ENCODE measurements at regions of chr1 and their contacts with region 1.

Region 1: GRCh38 chr1:198681831-198682759 is 43.3 kb downstream of the PTPRC start:
- DNase-seq: peak; percentile 93
- ATAC-seq: peak; percentile 89
- H3K4me3 ChIP-seq: peak overlapping the region; percentile 11; the same call in 1 of the 2 replicates
- H3K27ac ChIP-seq: peak overlapping the region; percentile 6; the same call in 1 of the 2 replicates
- H3K4me1 ChIP-seq: no peaks in the 10 kb centered on the region
- H3K27me3 ChIP-seq: no peaks in the 10 kb centered on the region
- CTCF ChIP-seq: no peak
- POLR2A ChIP-seq: 0 out of 2 replicates have a peak, but pooled peaks have one; percentile 18
- RAD21 ChIP-seq: peak; percentile 34

Region 2: DNA sequence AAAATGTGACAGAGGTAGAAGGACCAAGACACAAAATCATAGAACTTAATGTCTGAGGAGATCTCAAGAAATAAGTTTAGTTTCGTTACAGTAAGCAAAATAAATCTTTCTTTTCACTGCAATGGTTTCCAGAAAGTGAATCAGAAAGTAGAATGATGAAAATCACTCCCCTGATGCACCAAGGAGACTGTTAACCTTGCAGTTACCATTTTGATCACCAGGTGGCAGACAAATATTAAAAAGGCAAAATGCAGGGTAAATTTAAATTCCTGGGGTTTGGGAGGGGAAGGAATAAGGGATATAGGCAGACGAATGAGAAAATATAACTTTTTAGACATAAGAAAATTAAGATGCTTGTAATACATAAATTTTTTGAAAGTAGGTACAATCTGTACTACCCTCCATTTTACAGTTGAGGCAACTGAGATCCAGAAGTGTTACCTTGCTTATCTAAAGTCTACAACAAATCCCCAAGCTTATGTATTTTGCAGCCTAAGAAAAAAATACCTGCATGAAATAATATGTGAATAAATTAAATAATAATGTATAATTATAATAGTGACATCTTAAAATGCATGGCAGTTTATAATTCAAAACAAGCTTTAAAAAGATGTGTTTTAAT is 1160.9 kb before region 1 on chr1:
- CTCF ChIA-PET with region 1: no interaction called
- POLR2A ChIA-PET with region 1: no interaction called
- dilution Hi-C with region 1: no loop called
- in situ Hi-C with region 1: loop called (anchors 25 kb)
- intact Hi-C with region 1: loop called (anchors 5 kb)
- DNase-seq: peak; percentile 44
- ATAC-seq: peak; percentile 66
- H3K4me3 ChIP-seq: no peak overlapping the region
- H3K27ac ChIP-seq: no peak overlapping the region
- H3K4me1 ChIP-seq: no peaks in the 10 kb centered on the region
- H3K27me3 ChIP-seq: no peaks in the 10 kb centered on the region
- CTCF ChIP-seq: peak; percentile 60
- POLR2A ChIP-seq: no peak
- RAD21 ChIP-seq: peak; percentile 43

Region 3: GRCh38 chr1:197614916-197615692 is 1067.0 kb before region 1 on chr1:
- CTCF ChIA-PET with region 1: no interaction called
- POLR2A ChIA-PET with region 1: no interaction called
- dilution Hi-C with region 1: no loop called
- in situ Hi-C with region 1: no loop called
- intact Hi-C with region 1: loop called (anchors 2 kb)
- DNase-seq: peak; percentile 51
- ATAC-seq: peak; percentile 91
- H3K4me3 ChIP-seq: no peak overlapping the region
- H3K27ac ChIP-seq: no peak overlapping the region
- H3K4me1 ChIP-seq: 0 out of 2 replicates have a peak, but pooled peaks cover 2% of the 10 kb centered on the region
- H3K27me3 ChIP-seq: no peaks in the 10 kb centered on the region
- CTCF ChIP-seq: peak; percentile 66
- POLR2A ChIP-seq: no peak
- RAD21 ChIP-seq: peak; percentile 78

Region 4: GRCh38 chr1:197915862-197916499 is 766.1 kb before region 1 on chr1:
- CTCF ChIA-PET with region 1: no interaction called
- POLR2A ChIA-PET with region 1: no interaction called
- dilution Hi-C with region 1: no loop called
- in situ Hi-C with region 1: loop called (anchors 25 kb)
- intact Hi-C with region 1: loop called (anchors 10 kb)
- DNase-seq: peak; percentile 61
- ATAC-seq: peak; percentile 75
- H3K4me3 ChIP-seq: peak overlapping the region; percentile 12
- H3K27ac ChIP-seq: no peak overlapping the region
- H3K4me1 ChIP-seq: peaks cover 10% of the 10 kb centered on the region; the same call in 1 of the 2 replicates
- H3K27me3 ChIP-seq: peaks cover 100% of the 10 kb centered on the region
- CTCF ChIP-seq: peak; percentile 67
- POLR2A ChIP-seq: no peak
- RAD21 ChIP-seq: peak; percentile 60

Region 5: GRCh38 chr1:198102454-198102827 is 579.7 kb before region 1 on chr1:
- CTCF ChIA-PET with region 1: no interaction called
- POLR2A ChIA-PET with region 1: no interaction called
- dilution Hi-C with region 1: no loop called
- in situ Hi-C with region 1: loop called (anchors 10 kb)
- intact Hi-C with region 1: no loop called
- DNase-seq: peak; percentile 70
- ATAC-seq: peak; percentile 82
- H3K4me3 ChIP-seq: peak overlapping the region; percentile 29; the same call in 1 of the 2 replicates
- H3K27ac ChIP-seq: no peak overlapping the region
- H3K4me1 ChIP-seq: peaks cover 9% of the 10 kb centered on the region
- H3K27me3 ChIP-seq: no peaks in the 10 kb centered on the region
- CTCF ChIP-seq: no peak
- POLR2A ChIP-seq: no peak
- RAD21 ChIP-seq: no peak

Region 6: GRCh38 chr1:198283222-198283621 is 398.9 kb before region 1 on chr1:
- CTCF ChIA-PET with region 1: no interaction called
- POLR2A ChIA-PET with region 1: no interaction called
- dilution Hi-C with region 1: no loop called
- in situ Hi-C with region 1: no loop called
- intact Hi-C with region 1: loop called (anchors 10 kb)
- DNase-seq: peak; percentile 57
- ATAC-seq: peak; percentile 86
- H3K4me3 ChIP-seq: no peak overlapping the region
- H3K27ac ChIP-seq: no peak overlapping the region
- H3K4me1 ChIP-seq: peaks cover 7% of the 10 kb centered on the region
- H3K27me3 ChIP-seq: no peaks in the 10 kb centered on the region
- CTCF ChIP-seq: no peak
- POLR2A ChIP-seq: no peak
- RAD21 ChIP-seq: no peak

Region 7: GRCh38 chr1:198481661-198482060 is 200.4 kb before region 1 on chr1:
- CTCF ChIA-PET with region 1: no interaction called
- POLR2A ChIA-PET with region 1: no interaction called
- dilution Hi-C with region 1: no loop called
- in situ Hi-C with region 1: loop called (anchors 10 kb)
- intact Hi-C with region 1: no loop called
- DNase-seq: no peak
- ATAC-seq: no peak
- H3K4me3 ChIP-seq: no peak overlapping the region
- H3K27ac ChIP-seq: no peak overlapping the region
- H3K4me1 ChIP-seq: no peaks in the 10 kb centered on the region
- H3K27me3 ChIP-seq: no peaks in the 10 kb centered on the region
- CTCF ChIP-seq: no peak
- POLR2A ChIP-seq: no peak
- RAD21 ChIP-seq: no peak

Measured in IMR-90 (cell line).